ENCODE measurements at regions of chr2 and their contacts with region 1.

Region 1: DNA sequence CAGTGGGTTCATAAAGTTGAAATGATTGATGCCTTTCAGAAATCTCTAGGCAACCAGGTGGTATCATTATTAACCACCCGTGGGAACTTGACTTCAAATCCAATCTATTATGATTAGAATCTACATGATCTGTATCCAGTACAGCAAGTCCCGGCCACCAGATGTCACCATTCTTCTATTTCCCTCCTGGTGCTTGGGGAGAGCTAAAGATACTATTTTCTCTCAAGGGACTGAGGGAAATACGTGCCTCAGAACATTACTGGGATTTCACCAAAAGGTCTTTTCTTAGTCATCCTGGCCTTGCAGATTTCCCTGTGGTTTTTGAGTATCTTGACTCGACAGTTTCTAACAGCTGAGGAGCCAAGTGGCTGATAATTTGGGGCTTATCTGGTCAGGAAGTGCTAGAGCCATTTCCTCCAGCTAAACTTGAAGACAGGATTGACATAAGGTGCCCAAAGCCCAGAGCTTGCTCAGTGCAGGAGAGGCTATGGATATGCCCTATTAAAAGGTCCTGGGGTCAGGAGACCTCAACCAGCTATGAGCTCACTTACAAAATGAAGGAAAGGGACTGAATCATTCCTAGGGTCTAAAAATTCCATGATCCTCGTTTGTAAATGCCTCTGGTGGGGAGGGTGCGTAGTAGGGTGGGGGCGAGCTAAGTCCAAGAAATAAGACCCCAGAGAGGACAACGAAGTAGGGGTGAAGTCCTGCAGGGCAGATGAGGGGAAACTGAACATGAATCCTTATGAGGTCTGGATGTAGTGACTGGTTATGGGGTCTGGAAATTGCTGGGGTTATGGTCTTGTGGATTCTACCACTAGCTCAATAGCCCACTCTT is 135.4 kb upstream of the MGAT5 start:
- DNase-seq: peak; percentile 37 to 86 (median 79)
- ATAC-seq: peak; percentile 64
- H3K4me3 ChIP-seq: peak overlapping the region; percentile 93
- H3K4me3 Mint-ChIP-seq: peak overlapping the region; percentile 82 to 99 (median 96)
- H3K27ac ChIP-seq: no peak overlapping the region
- H3K27ac Mint-ChIP-seq: peak overlapping the region in 5 of 9 donors; percentile 82 to 99 (median 86)
- H3K4me1 ChIP-seq: peaks cover 15 to 32% of the 10 kb centered on the region in 2 donors
- H3K4me1 Mint-ChIP-seq: peaks cover 30 to 39% (median 35%) of the 10 kb centered on the region in 7 donors
- H3K27me3 ChIP-seq: no peaks in the 10 kb centered on the region
- H3K27me3 Mint-ChIP-seq: peaks cover 0 to 21% (median 0%) of the 10 kb centered on the region in 5 donors

Region 2: GRCh38 chr2:133247631-133248030 is 870.9 kb before region 1 on chr2:
- CTCF ChIA-PET with region 1: no interaction called
- POLR2A ChIA-PET with region 1: no interaction called
- intact Hi-C with region 1: no loop called
- DNase-seq: no peak
- ATAC-seq: no peak
- H3K4me3 ChIP-seq: no peak overlapping the region
- H3K4me3 Mint-ChIP-seq: no peak overlapping the region
- H3K27ac ChIP-seq: no peak overlapping the region
- H3K27ac Mint-ChIP-seq: no peak overlapping the region
- H3K4me1 ChIP-seq: no peaks in the 10 kb centered on the region
- H3K4me1 Mint-ChIP-seq: no peaks in the 10 kb centered on the region
- H3K27me3 ChIP-seq: no peaks in the 10 kb centered on the region
- H3K27me3 Mint-ChIP-seq: no peaks in the 10 kb centered on the region

Region 3: DNA sequence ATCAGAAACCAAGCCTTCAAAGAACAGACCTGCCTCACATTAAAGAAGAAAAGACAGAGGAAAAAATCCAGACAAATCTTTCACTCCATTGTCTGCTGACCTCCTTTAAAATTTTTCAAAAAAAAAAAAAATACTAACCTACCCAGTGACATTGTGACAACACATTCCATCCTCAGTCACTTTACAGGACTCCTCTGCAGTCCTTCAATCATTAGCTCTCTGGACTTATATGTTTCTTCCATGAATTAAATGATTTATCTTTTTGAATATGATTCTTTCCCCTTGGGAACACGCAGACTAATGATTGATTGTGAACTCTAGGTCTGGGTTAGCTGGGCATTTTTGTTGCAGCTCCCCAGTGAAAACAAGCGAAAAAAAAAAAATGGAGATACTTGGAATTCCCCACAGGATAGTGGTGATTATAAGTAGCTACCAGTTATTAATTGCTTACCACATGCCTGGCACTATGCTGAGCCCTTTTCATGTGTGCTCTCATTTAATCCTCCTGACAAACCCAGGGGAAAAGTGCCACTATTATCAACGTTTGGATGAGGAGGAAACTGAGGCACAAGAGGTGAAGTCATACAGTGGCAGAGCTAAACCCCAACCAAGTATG is 288.9 kb before region 1 on chr2:
- CTCF ChIA-PET with region 1: no interaction called
- POLR2A ChIA-PET with region 1: no interaction called
- intact Hi-C with region 1: no loop called
- DNase-seq: no peak
- ATAC-seq: no peak
- H3K4me3 ChIP-seq: no peak overlapping the region
- H3K4me3 Mint-ChIP-seq: no peak overlapping the region
- H3K27ac ChIP-seq: no peak overlapping the region
- H3K27ac Mint-ChIP-seq: no peak overlapping the region
- H3K4me1 ChIP-seq: no peaks in the 10 kb centered on the region
- H3K4me1 Mint-ChIP-seq: peaks cover 0 to 6% (median 0%) of the 10 kb centered on the region in 7 donors
- H3K27me3 ChIP-seq: no peaks in the 10 kb centered on the region
- H3K27me3 Mint-ChIP-seq: peaks cover 0 to 29% (median 16%) of the 10 kb centered on the region in 5 donors

Region 4: GRCh38 chr2:134181210-134181609 is 62.7 kb after region 1 on chr2:
- CTCF ChIA-PET with region 1: interaction called, 8 read pairs
- POLR2A ChIA-PET with region 1: interaction called, 10 read pairs
- intact Hi-C with region 1: loop called (anchors 1 to 2 kb)
- DNase-seq: peak in 8 of 9 donors; percentile 30 to 79 (median 68)
- ATAC-seq: peak; percentile 87
- H3K4me3 ChIP-seq: no peak overlapping the region
- H3K4me3 Mint-ChIP-seq: peak overlapping the region; percentile 54 to 86 (median 67)
- H3K27ac ChIP-seq: peak overlapping the region; percentile 18
- H3K27ac Mint-ChIP-seq: peak overlapping the region; percentile 84 to 97 (median 91)
- H3K4me1 ChIP-seq: peaks cover 22 to 45% of the 10 kb centered on the region in 2 donors
- H3K4me1 Mint-ChIP-seq: peaks cover 52 to 95% (median 93%) of the 10 kb centered on the region in 7 donors
- H3K27me3 ChIP-seq: no peaks in the 10 kb centered on the region
- H3K27me3 Mint-ChIP-seq: no peaks in the 10 kb centered on the region

Region 5: DNA sequence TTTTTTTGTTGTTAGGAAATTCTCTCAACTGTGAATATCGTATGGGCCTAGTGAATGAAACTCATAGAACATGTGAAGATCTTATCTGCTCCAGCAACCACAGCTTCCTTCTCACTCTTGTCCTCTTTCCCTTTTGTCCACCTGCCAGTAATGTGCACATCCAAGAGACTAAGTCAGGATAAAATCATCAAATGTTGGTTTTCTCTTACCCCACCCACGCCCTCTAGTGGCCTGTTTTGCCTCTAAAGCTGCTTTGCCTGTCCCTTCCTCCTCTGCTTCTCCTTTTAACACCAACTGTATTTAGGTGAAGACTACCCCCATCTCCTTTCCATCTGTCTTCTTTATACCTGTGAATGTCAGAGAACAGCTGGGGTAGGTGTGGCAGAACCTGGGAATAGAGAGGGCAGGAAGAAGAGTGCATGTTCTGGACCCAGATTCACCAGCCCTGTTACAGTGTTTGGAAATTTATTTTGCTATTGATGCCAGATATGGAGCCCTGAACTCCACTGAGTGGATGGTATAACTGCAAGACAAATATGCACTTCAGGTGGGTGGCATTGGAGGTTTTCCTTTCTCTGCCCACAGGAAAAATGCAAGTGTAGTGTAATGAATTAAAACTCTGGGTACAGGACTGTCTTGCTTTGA is 127.0 kb after region 1 on chr2:
- CTCF ChIA-PET with region 1: interaction called, 75 read pairs
- POLR2A ChIA-PET with region 1: interaction called, 6 read pairs
- intact Hi-C with region 1: loop called (anchors 1 kb)
- DNase-seq: peak; percentile 47 to 71 (median 64)
- ATAC-seq: peak; percentile 85
- H3K4me3 ChIP-seq: no peak overlapping the region
- H3K4me3 Mint-ChIP-seq: peak overlapping the region; percentile 3 to 68 (median 48)
- H3K27ac ChIP-seq: no peak overlapping the region
- H3K27ac Mint-ChIP-seq: peak overlapping the region in 8 of 9 donors; percentile 4 to 82 (median 73)
- H3K4me1 ChIP-seq: peaks cover 50 to 54% of the 10 kb centered on the region in 2 donors
- H3K4me1 Mint-ChIP-seq: peaks cover 52 to 91% (median 74%) of the 10 kb centered on the region in 7 donors
- H3K27me3 ChIP-seq: no peaks in the 10 kb centered on the region
- H3K27me3 Mint-ChIP-seq: no peaks in the 10 kb centered on the region

Region 6: DNA sequence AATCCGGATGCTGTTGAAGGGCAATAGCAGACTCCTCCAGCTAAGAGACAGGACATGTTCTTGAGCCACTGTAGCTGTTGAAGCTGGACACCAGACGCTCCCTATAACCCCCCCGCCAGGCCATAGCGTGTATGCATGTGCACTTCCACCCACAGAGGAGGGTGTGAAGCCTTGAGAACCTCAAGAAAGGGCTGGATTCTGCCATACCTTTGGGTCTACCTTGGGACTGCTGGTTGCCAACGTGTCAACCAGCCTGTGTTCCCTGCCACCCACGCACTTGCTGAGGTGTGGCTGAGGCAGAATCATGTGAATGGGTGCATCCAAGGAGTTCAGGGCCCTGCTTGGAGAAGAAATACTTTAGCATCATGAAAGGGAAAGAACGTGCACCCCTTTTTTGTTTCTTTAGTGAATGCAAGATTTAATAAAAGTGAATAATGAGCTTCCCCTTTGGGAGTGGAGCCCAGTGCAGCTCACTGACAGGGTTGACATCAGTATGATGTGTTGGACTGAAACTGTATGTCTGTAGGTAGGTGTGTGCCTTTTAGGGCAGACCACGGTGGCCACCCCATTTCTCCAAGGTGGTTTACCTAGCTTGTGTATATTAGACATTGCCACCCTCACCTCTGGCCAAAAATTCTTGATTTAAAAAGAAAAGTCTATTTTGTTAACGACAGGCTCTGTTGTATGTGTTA is 333.7 kb after region 1 on chr2:
- CTCF ChIA-PET with region 1: interaction called, 11 read pairs
- POLR2A ChIA-PET with region 1: no interaction called
- intact Hi-C with region 1: loop called in 1 of 2 experiments (anchors 1 kb)
- DNase-seq: no peak
- ATAC-seq: no peak
- H3K4me3 ChIP-seq: no peak overlapping the region
- H3K4me3 Mint-ChIP-seq: no peak overlapping the region
- H3K27ac ChIP-seq: no peak overlapping the region
- H3K27ac Mint-ChIP-seq: peak overlapping the region in 4 of 9 donors; percentile 8 to 70 (median 32)
- H3K4me1 ChIP-seq: no peaks in the 10 kb centered on the region
- H3K4me1 Mint-ChIP-seq: peaks cover 0 to 2% (median 0%) of the 10 kb centered on the region in 7 donors
- H3K27me3 ChIP-seq: no peaks in the 10 kb centered on the region
- H3K27me3 Mint-ChIP-seq: no peaks in the 10 kb centered on the region

Region 7: GRCh38 chr2:134897932-134898331 is 779.4 kb after region 1 on chr2:
- CTCF ChIA-PET with region 1: interaction called, 3 read pairs
- POLR2A ChIA-PET with region 1: no interaction called
- intact Hi-C with region 1: loop called in 1 of 2 experiments (anchors 1 kb)
- DNase-seq: peak in 5 of 9 donors; percentile 6 to 31 (median 20)
- ATAC-seq: no peak
- H3K4me3 ChIP-seq: no peak overlapping the region
- H3K4me3 Mint-ChIP-seq: no peak overlapping the region
- H3K27ac ChIP-seq: no peak overlapping the region
- H3K27ac Mint-ChIP-seq: no peak overlapping the region
- H3K4me1 ChIP-seq: no peaks in the 10 kb centered on the region
- H3K4me1 Mint-ChIP-seq: no peaks in the 10 kb centered on the region
- H3K27me3 ChIP-seq: no peaks in the 10 kb centered on the region
- H3K27me3 Mint-ChIP-seq: peaks cover 0 to 40% (median 0%) of the 10 kb centered on the region in 5 donors

Region 8: GRCh38 chr2:135741395-135742324 is 1623.2 kb after region 1 on chr2 and contains the start of gene UBXN4:
- CTCF ChIA-PET with region 1: no interaction called
- POLR2A ChIA-PET with region 1: no interaction called
- intact Hi-C with region 1: loop called in 1 of 2 experiments (anchors 2 kb)
- DNase-seq: peak; percentile 73 to 93 (median 88)
- ATAC-seq: peak; percentile 95
- H3K4me3 ChIP-seq: peak within 1 kb of the TSS; percentile 88
- H3K4me3 Mint-ChIP-seq: peak within 1 kb of the TSS; percentile 92 to 98 (median 95)
- H3K27ac ChIP-seq: peak within 1 kb of the TSS; percentile 97
- H3K27ac Mint-ChIP-seq: peak within 1 kb of the TSS; percentile 89 to 99 (median 95)
- H3K4me1 ChIP-seq: peaks cover 20 to 22% of the 10 kb centered on the region in 2 donors
- H3K4me1 Mint-ChIP-seq: peaks cover 24 to 47% (median 43%) of the 10 kb centered on the region in 7 donors
- H3K27me3 ChIP-seq: no peaks in the 10 kb centered on the region
- H3K27me3 Mint-ChIP-seq: no peaks in the 10 kb centered on the region
- total RNA-seq, gene UBXN4: 115 to 158 (median 145) TPM

Measured in naive thymus-derived CD4-positive, alpha-beta T cell (primary cell).